ENCODE measurements at regions of chr1 and their contacts with region 1.

Region 1: GRCh38 chr1:156060937-156061636 is at the start of gene RAB25:
- DNase-seq: no peak
- ATAC-seq: no peak
- H3K4me3 ChIP-seq: no peak within 1 kb of the TSS
- H3K27ac ChIP-seq: no peak within 1 kb of the TSS
- H3K4me1 ChIP-seq: peaks cover 0 to 7% (median 2%) of the 10 kb centered on the region in 9 donors
- H3K27me3 ChIP-seq: no peaks in the 10 kb centered on the region
- CTCF ChIP-seq: no peak
- total RNA-seq, gene RAB25: 0.50 TPM in 1 of 10 donors, not detected in the others

Region 2: GRCh38 chr1:155884031-155884960 is 176.8 kb before region 1 on chr1:
- intact Hi-C with region 1: no loop called
- DNase-seq: no peak
- ATAC-seq: no peak
- H3K4me3 ChIP-seq: no peak overlapping the region
- H3K27ac ChIP-seq: peak overlapping the region in 2 of 10 donors; percentile 26
- H3K4me1 ChIP-seq: no peaks in the 10 kb centered on the region
- H3K27me3 ChIP-seq: no peaks in the 10 kb centered on the region
- CTCF ChIP-seq: no peak

Region 3: DNA sequence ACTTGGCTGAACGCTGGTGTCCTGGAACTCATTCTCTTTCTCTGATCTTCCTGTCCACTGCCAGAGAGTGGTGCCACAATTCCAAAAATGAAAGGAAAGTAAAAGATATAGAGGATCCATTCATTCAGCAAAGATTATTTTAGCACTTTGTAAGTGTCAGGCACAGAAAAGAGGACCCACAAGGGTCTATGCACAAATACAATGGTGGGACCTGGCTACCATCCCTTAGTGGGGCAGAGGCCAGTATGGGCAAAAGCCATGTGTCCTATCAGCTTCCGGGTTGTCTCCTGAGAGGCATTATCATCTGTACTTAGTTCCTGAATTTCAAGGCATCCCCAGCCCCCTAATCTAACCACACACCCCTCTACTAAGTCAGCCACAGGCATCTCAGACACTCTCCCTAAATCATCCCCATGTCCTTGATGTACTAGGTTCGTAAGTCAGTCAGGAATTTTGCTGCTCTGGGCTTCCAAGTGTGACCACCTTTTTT is 59.4 kb before region 1 on chr1:
- intact Hi-C with region 1: loop called in 1 of 10 experiments (anchors 10 kb)
- DNase-seq: no peak
- ATAC-seq: peak in 1 of 8 donors; percentile 42
- H3K4me3 ChIP-seq: no peak overlapping the region
- H3K27ac ChIP-seq: no peak overlapping the region
- H3K4me1 ChIP-seq: peaks cover 0 to 11% (median 4%) of the 10 kb centered on the region in 9 donors
- H3K27me3 ChIP-seq: no peaks in the 10 kb centered on the region
- CTCF ChIP-seq: peak in 1 of 9 donors; percentile 16

Region 4: GRCh38 chr1:156020292-156021089 is 40.6 kb before region 1 on chr1 and contains the start of gene SSR2:
- intact Hi-C with region 1: loop called in 3 of 10 experiments (anchors 5 kb)
- DNase-seq: peak; percentile 75 to 93
- ATAC-seq: peak; percentile 95 to 99 (median 99)
- H3K4me3 ChIP-seq: peak within 1 kb of the TSS; percentile 56 to 98 (median 80)
- H3K27ac ChIP-seq: peak within 1 kb of the TSS; percentile 63 to 98 (median 92)
- H3K4me1 ChIP-seq: peaks cover 3 to 24% (median 13%) of the 10 kb centered on the region in 9 donors
- H3K27me3 ChIP-seq: no peaks in the 10 kb centered on the region
- CTCF ChIP-seq: no peak
- total RNA-seq, gene SSR2: 70.3 to 124 (median 73.7) TPM